ENCODE measurements at regions of chr1 and their contacts with region 1.

Region 1: GRCh38 chr1:198598796-198599321 is 40.0 kb upstream of the PTPRC start:
- DNase-seq: peak; percentile 40
- ATAC-seq: peak; percentile 76
- H3K4me3 Mint-ChIP-seq: peak overlapping the region; percentile 90
- H3K27ac Mint-ChIP-seq: peak overlapping the region; percentile 99
- H3K4me1 Mint-ChIP-seq: peaks cover 90% of the 10 kb centered on the region
- H3K27me3 Mint-ChIP-seq: no peaks in the 10 kb centered on the region
- CTCF ChIP-seq: no peak

Region 2: DNA sequence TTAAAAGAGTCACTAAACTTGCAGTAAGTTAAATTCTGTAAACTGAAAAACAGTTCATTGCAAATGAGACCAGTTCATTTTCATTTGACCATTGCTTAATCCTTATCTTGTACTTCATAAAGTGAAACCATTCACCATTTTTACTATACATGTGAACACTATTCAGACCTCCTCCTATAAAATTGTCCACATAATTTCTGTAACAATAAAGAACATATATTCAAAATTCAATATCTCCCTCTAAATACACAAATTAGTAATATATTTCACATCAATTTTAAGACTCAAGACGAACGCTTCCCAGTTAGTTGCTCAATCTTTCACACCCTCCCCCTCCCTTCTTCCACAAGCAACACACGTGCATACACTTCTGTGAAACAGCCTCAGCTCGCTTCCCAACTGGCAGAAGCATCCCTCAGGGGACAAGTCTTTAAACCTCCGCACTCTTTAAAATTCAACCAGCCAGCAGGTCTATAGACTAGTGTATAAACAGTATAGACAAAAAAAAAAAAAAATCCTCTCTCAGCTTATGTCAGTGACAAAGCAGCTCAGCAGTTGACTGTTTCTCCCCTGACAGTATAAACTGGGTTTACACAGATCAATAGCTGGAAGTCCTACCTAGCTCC is 923.2 kb before region 1 on chr1:
- CTCF ChIA-PET with region 1: no interaction called
- POLR2A ChIA-PET with region 1: no interaction called
- intact Hi-C with region 1: no loop called
- DNase-seq: no peak
- ATAC-seq: no peak
- H3K4me3 Mint-ChIP-seq: no peak overlapping the region
- H3K27ac Mint-ChIP-seq: no peak overlapping the region
- H3K4me1 Mint-ChIP-seq: peaks cover 7% of the 10 kb centered on the region
- H3K27me3 Mint-ChIP-seq: no peaks in the 10 kb centered on the region
- CTCF ChIP-seq: no peak

Region 3: DNA sequence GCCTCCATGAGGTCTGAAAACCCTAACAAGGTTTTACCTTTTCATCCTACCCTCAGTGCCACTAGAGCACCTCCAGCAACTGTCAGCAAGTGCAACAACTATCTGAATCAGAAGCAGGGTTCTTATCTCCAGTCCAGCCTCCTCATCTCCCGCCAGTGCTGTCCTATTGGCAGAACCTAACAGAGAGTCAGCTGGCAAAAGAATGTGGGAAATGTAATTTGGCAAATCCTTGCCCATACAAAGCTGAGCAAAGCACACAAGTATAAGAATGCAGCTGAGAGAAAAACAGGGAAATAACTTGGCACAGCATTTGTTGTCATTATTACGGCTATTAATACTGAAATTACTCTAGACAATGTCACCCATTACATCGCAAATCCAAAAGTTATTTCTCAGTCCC is 182.6 kb before region 1 on chr1:
- CTCF ChIA-PET with region 1: no interaction called
- POLR2A ChIA-PET with region 1: no interaction called
- intact Hi-C with region 1: no loop called
- DNase-seq: no peak
- ATAC-seq: no peak
- H3K4me3 Mint-ChIP-seq: no peak overlapping the region
- H3K27ac Mint-ChIP-seq: no peak overlapping the region
- H3K4me1 Mint-ChIP-seq: no peaks in the 10 kb centered on the region
- H3K27me3 Mint-ChIP-seq: peaks cover 6% of the 10 kb centered on the region
- CTCF ChIP-seq: no peak

Region 4: DNA sequence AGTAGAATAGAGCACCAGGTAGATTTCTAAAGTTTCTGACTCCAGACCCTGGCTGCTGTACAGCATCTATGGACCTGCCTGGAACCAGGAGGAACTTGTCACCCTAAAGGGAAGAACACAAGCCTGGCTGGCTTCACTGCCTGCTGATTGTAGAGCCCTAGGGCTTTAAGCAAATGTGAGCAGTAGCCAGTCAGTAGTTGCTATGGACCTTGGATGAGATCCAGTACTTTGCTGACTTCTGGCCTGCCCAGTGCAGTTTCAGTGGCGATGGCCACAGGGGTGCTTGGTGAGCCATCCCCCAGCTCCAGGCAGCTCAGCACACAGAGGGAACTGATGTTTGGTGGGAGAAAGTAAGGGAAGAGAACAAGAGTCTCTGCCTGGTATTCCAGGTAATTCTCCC is 126.7 kb before region 1 on chr1:
- CTCF ChIA-PET with region 1: interaction called, 4 read pairs
- POLR2A ChIA-PET with region 1: no interaction called
- intact Hi-C with region 1: loop called (anchors 5 kb)
- DNase-seq: no peak
- ATAC-seq: no peak
- H3K4me3 Mint-ChIP-seq: no peak overlapping the region
- H3K27ac Mint-ChIP-seq: no peak overlapping the region
- H3K4me1 Mint-ChIP-seq: peaks cover 2% of the 10 kb centered on the region
- H3K27me3 Mint-ChIP-seq: no peaks in the 10 kb centered on the region
- CTCF ChIP-seq: no peak

Region 5: DNA sequence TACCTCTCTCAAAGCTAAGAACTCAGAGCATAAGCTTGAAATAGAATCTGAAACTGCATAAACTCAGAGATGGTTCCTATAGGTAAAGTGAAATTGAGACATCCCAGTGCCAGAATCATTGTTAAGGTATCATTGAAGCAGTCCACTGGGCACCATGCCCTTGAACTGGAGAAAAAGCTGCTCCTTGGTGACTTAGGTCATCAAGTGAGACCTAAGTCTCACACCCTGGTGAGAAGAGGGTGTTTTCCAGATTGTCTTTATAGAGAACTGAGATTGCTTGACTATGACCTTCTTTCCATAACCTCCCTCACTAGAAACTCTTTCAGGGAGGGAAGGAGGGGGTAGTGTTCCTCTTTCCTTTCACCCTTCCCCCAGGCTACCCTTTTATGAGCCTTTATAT is 49.0 kb before region 1 on chr1:
- CTCF ChIA-PET with region 1: no interaction called
- POLR2A ChIA-PET with region 1: interaction called, 25 read pairs
- intact Hi-C with region 1: loop called (anchors 1 kb)
- DNase-seq: no peak
- ATAC-seq: peak; percentile 90
- H3K4me3 Mint-ChIP-seq: peak overlapping the region; percentile 63
- H3K27ac Mint-ChIP-seq: peak overlapping the region; percentile 89
- H3K4me1 Mint-ChIP-seq: peaks cover 67% of the 10 kb centered on the region
- H3K27me3 Mint-ChIP-seq: no peaks in the 10 kb centered on the region
- CTCF ChIP-seq: no peak

Region 6: GRCh38 chr1:198612471-198613260 is 13.8 kb after region 1 on chr1:
- CTCF ChIA-PET with region 1: interaction called, 3 read pairs
- POLR2A ChIA-PET with region 1: interaction called, 19 read pairs
- intact Hi-C with region 1: loop called (anchors 1 kb)
- DNase-seq: no peak
- ATAC-seq: peak; percentile 78
- H3K4me3 Mint-ChIP-seq: peak overlapping the region; percentile 75
- H3K27ac Mint-ChIP-seq: peak overlapping the region; percentile 86
- H3K4me1 Mint-ChIP-seq: peaks cover 58% of the 10 kb centered on the region
- H3K27me3 Mint-ChIP-seq: no peaks in the 10 kb centered on the region
- CTCF ChIP-seq: no peak

Region 7: GRCh38 chr1:198651650-198652400 is 53.0 kb after region 1 on chr1:
- CTCF ChIA-PET with region 1: no interaction called
- POLR2A ChIA-PET with region 1: interaction called, 20 read pairs
- intact Hi-C with region 1: loop called (anchors 2 kb)
- DNase-seq: no peak
- ATAC-seq: peak; percentile 69
- H3K4me3 Mint-ChIP-seq: peak overlapping the region; percentile 68
- H3K27ac Mint-ChIP-seq: peak overlapping the region; percentile 90
- H3K4me1 Mint-ChIP-seq: peaks cover 83% of the 10 kb centered on the region
- H3K27me3 Mint-ChIP-seq: no peaks in the 10 kb centered on the region
- CTCF ChIP-seq: no peak